ENCODE measurements at regions of chr20 and their contacts with region 1.

Region 1: GRCh38 chr20:1646975-1647431 is 10.6 kb downstream of the SIRPG start:
- DNase-seq: no peak
- H3K4me3 ChIP-seq: no peak overlapping the region
- H3K27ac ChIP-seq: no peak overlapping the region
- H3K4me1 ChIP-seq: no peaks in the 10 kb centered on the region
- H3K27me3 ChIP-seq: no peaks in the 10 kb centered on the region
- CTCF ChIP-seq: no peak

Region 2: DNA sequence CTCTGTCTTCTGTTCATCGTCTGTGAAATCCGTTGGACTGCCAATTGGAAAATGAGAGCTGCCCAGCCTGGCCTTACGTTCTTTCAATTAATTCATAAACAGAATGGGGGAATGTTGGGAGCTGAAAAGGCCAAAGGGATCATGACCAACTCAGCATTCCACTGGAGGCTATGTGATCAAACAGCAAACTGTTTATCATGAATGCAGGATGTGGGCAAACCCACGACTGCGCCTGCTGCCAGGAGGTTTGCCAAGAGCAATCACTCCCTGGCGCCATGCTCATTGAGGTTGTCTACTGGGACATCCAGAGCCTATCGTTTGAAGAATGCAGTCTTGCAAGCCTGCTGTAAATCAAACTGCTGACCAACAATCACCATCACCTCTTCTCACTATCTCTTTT is 244.9 kb before region 1 on chr20:
- CTCF ChIA-PET with region 1: no interaction called
- dilution Hi-C with region 1: no loop called
- in situ Hi-C with region 1: no loop called
- intact Hi-C with region 1: no loop called
- DNase-seq: peak; percentile 73
- H3K4me3 ChIP-seq: no peak overlapping the region
- H3K27ac ChIP-seq: no peak overlapping the region
- H3K4me1 ChIP-seq: peaks cover 36% of the 10 kb centered on the region
- H3K27me3 ChIP-seq: no peaks in the 10 kb centered on the region
- CTCF ChIP-seq: no peak

Region 3: GRCh38 chr20:1694672-1695071 is 47.7 kb after region 1 on chr20:
- CTCF ChIA-PET with region 1: no interaction called
- dilution Hi-C with region 1: loop called (anchors 5 kb)
- in situ Hi-C with region 1: no loop called
- intact Hi-C with region 1: no loop called
- DNase-seq: no peak
- H3K4me3 ChIP-seq: no peak overlapping the region
- H3K27ac ChIP-seq: no peak overlapping the region
- H3K4me1 ChIP-seq: no peaks in the 10 kb centered on the region
- H3K27me3 ChIP-seq: no peaks in the 10 kb centered on the region
- CTCF ChIP-seq: no peak